ENCODE measurements at regions of chr11 and their contacts with region 1.

Region 1: DNA sequence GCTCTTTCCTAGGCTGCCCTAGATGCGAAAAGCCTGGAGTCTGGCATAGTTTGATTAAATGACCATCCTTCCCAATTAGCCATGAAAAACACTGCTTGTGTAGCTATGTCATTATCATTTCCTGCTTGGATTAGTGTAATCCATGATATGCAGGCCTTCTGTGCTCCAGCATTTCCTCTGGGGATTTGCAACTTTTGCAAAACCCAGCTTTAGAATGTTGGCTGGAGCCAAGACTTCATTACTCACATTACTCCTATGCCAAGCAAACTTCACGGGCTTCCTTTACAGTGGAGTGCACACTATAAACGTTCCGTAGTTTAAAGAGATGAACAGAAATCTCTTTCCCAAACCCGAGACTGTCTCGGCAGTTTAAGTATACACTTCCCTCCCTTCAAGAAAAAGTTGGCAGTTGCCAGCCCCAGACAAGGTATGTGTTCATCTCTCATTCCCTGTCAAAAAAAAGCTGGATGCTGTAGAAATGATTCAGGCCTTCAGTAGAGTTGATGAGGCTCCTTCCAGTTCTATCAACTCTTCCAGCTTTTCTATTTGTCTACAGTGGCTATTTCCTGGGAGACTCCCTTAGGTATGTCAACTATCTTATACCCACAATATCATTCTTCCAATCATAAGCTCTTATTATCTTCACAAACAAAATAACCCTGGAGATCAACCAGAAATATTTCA is 180.0 kb downstream of the MAML2 start:
- DNase-seq: no peak
- ATAC-seq: no peak
- H3K4me3 ChIP-seq: no peak overlapping the region
- H3K4me3 Mint-ChIP-seq: no peak overlapping the region
- H3K27ac ChIP-seq: no peak overlapping the region
- H3K27ac Mint-ChIP-seq: peak overlapping the region; percentile 2 to 46
- H3K4me1 ChIP-seq: peaks cover 8 to 9% of the 10 kb centered on the region in 2 experiments
- H3K4me1 Mint-ChIP-seq: peaks cover 64 to 77% (median 76%) of the 10 kb centered on the region in 3 donors
- H3K27me3 ChIP-seq: no peaks in the 10 kb centered on the region
- H3K27me3 Mint-ChIP-seq: no peaks in the 10 kb centered on the region

Region 2: GRCh38 chr11:95803973-95804372 is 359.0 kb before region 1 on chr11:
- CTCF ChIA-PET with region 1: no interaction called
- POLR2A ChIA-PET with region 1: interaction called in 1 of 2 experiments, 15 read pairs
- DNase-seq: no peak
- ATAC-seq: no peak
- H3K4me3 ChIP-seq: no peak overlapping the region
- H3K4me3 Mint-ChIP-seq: no peak overlapping the region
- H3K27ac ChIP-seq: no peak overlapping the region
- H3K27ac Mint-ChIP-seq: no peak overlapping the region
- H3K4me1 ChIP-seq: no peaks in the 10 kb centered on the region
- H3K4me1 Mint-ChIP-seq: peaks cover 0 to 19% (median 2%) of the 10 kb centered on the region in 3 donors
- H3K27me3 ChIP-seq: no peaks in the 10 kb centered on the region
- H3K27me3 Mint-ChIP-seq: no peaks in the 10 kb centered on the region

Region 3: DNA sequence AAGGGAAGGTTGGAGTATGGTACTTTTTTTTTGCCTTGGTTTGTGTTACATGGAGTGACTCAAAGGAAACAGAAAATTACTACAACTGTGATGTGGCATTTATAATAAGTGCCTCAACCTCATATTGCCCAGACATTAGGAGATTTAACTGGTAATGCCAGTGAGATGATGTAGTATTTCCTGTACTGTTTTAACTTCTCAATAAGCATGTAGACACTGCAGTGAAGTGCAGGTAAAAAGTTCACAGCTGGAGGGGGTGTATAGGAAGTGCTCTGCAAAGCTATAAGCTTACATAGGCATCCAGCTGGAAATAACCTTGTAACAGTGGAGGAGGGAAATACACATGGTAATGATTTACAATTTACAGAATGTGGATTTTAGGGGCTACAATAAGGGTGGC is 100.8 kb before region 1 on chr11:
- CTCF ChIA-PET with region 1: interaction called in 1 of 2 experiments, 10 read pairs
- POLR2A ChIA-PET with region 1: interaction called in 1 of 2 experiments, 3 read pairs
- DNase-seq: peak in 21 of 35 experiments; percentile 7 to 49 (median 16)
- ATAC-seq: peak; percentile 84 to 98 (median 94)
- H3K4me3 ChIP-seq: no peak overlapping the region
- H3K4me3 Mint-ChIP-seq: no peak overlapping the region
- H3K27ac ChIP-seq: no peak overlapping the region
- H3K27ac Mint-ChIP-seq: peak overlapping the region; percentile 59 to 71
- H3K4me1 ChIP-seq: peaks cover 4 to 15% of the 10 kb centered on the region in 2 experiments
- H3K4me1 Mint-ChIP-seq: peaks cover 67 to 76% (median 70%) of the 10 kb centered on the region in 3 donors
- H3K27me3 ChIP-seq: no peaks in the 10 kb centered on the region
- H3K27me3 Mint-ChIP-seq: no peaks in the 10 kb centered on the region

Region 4: DNA sequence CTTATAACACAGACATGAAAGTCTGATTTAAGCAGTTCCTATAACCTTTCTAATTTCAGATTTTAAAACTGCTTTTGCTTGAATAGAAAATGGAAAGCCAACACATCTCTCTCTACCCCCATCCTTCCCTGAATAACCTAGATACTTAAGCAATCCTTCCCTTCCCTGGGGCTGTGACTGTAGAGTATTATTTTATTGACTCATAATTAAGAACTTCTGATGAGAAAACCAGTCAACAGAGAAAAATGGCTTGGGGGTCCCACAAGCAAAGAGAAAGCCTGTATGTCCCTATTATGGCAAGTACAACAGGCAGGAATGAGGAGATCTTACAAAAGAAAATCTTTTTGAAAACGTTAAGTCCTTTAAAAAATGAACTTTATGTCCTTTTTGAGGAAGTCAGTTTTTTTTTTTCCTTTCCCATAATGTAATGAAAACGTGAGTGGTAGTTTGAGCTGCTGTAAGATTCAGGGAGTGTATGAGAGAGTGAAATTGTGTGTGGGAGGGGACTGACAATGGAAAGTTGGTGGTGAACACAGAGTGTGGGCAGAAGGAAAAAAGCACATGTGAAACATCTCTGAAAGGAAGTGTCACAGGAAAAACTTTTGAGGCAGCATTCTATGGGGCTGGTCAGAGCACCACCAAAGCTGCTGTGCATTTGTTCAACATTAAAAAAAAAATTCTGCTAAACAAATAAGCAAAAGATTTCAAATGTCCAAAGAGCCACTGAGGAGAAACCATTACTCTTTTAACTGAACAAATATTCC is 25.5 kb after region 1 on chr11:
- CTCF ChIA-PET with region 1: interaction called in 1 of 2 experiments, 10 read pairs
- POLR2A ChIA-PET with region 1: no interaction called
- DNase-seq: no peak
- ATAC-seq: peak in 2 of 4 experiments; percentile 52 to 53
- H3K4me3 ChIP-seq: no peak overlapping the region
- H3K4me3 Mint-ChIP-seq: peak overlapping the region in 2 of 3 donors; percentile 2 to 61
- H3K27ac ChIP-seq: no peak overlapping the region
- H3K27ac Mint-ChIP-seq: peak overlapping the region; percentile 28 to 67
- H3K4me1 ChIP-seq: peaks cover 19 to 32% of the 10 kb centered on the region in 2 experiments
- H3K4me1 Mint-ChIP-seq: peaks cover 79 to 81% (median 80%) of the 10 kb centered on the region in 3 donors
- H3K27me3 ChIP-seq: no peaks in the 10 kb centered on the region
- H3K27me3 Mint-ChIP-seq: no peaks in the 10 kb centered on the region

Region 5: DNA sequence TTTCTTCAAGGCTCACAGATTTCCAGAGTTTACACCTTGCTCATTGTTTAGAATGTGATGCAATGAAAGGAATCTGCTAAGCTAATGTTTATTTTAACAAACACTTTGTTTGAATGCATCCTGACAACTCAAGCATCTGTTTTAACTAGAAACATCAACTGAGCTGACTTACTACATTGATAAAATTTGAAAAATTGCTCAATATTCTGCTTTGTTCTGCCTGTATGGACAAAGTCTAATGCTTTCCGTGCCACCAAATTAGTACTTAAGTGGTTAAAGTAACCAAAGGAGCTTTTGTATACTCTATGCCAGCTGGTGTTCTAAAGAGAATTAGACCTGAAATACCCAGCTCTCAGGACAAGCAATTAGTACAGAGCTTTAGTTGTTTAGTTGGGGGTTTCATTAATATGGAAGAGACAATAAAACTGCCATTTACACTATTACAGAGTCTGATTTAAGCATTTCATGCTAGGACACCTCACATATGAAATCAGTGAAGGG is 74.9 kb after region 1 on chr11:
- CTCF ChIA-PET with region 1: interaction called in 1 of 2 experiments, 15 read pairs
- POLR2A ChIA-PET with region 1: interaction called in 1 of 2 experiments, 4 read pairs
- DNase-seq: no peak
- ATAC-seq: no peak
- H3K4me3 ChIP-seq: no peak overlapping the region
- H3K4me3 Mint-ChIP-seq: no peak overlapping the region
- H3K27ac ChIP-seq: no peak overlapping the region
- H3K27ac Mint-ChIP-seq: no peak overlapping the region
- H3K4me1 ChIP-seq: peaks cover 12 to 22% of the 10 kb centered on the region in 2 experiments
- H3K4me1 Mint-ChIP-seq: peaks cover 31 to 47% (median 31%) of the 10 kb centered on the region in 3 donors
- H3K27me3 ChIP-seq: no peaks in the 10 kb centered on the region
- H3K27me3 Mint-ChIP-seq: no peaks in the 10 kb centered on the region